Gastrocnemius medialis (tissue), 4 donors: ENCODE measurements at regions of chr6 and their contacts with region 1.

Region 1: GRCh38 chr6:157764178-157765033 is 58.6 kb upstream of the SNX9 start:
- DNase-seq: peak; percentile 62 to 72
- ATAC-seq: peak; percentile 49 to 69
- H3K4me3 ChIP-seq: no peak overlapping the region
- H3K27ac ChIP-seq: peak overlapping the region; percentile 10 to 62 (median 56)
- H3K4me1 ChIP-seq: peaks cover 18 to 20% of the 10 kb centered on the region in 2 donors
- H3K27me3 ChIP-seq: no peaks in the 10 kb centered on the region
- CTCF ChIP-seq: no peak
- POLR2A ChIP-seq: no peak

Region 2: DNA sequence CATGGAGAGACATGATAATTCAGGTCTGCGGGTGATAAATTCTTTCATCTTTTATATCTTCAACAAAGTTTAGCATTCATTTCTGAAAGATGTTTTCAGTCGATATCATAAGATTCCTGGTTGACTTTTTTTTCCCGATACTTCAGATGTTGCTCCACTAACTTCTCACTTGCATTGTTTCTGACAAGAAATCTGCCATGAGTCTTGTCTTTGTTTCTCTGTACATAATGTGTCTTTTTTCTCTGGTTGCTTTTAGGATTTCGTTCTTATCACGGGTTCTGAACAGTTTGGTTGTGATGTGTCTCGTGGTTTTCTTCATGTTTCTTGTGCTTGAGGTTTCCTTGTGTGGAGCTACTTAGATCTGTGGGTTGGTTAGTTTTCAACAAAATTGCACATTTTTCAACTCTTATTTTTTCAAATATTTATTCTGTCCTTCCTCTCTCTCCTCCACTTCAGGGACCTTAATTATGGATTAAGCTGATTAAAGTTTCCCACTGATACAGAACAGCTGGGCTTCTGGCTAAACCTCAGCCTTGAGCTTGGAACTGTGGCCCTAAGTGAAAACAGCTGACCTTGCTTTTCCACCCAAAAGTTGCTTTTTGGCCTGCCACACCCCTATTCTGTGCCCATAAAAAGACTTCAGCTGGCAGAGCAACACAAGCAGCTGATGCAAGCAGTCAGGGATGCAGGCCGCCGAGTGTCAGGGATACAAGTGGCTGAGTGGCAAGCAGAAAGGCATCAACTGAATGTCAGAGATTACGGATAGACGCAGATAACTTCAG is 39.3 kb before region 1 on chr6:
- in situ Hi-C with region 1: no loop called
- intact Hi-C with region 1: loop called (anchors 5 kb)
- DNase-seq: no peak
- ATAC-seq: no peak
- H3K4me3 ChIP-seq: no peak overlapping the region
- H3K27ac ChIP-seq: no peak overlapping the region
- H3K4me1 ChIP-seq: peaks cover 0 to 22% of the 10 kb centered on the region in 2 donors
- H3K27me3 ChIP-seq: peaks cover 0 to 3% (median 0%) of the 10 kb centered on the region in 3 donors
- CTCF ChIP-seq: no peak
- POLR2A ChIP-seq: no peak